ENCODE measurements at regions of chr2 and their contacts with region 1.

Region 1: GRCh38 chr2:135004005-135004746 is 43.1 kb downstream of the MAP3K19 start:
- DNase-seq: peak; percentile 32 to 76 (median 62)
- ATAC-seq: peak; percentile 92
- H3K4me3 ChIP-seq: no peak overlapping the region
- H3K4me3 Mint-ChIP-seq: peak overlapping the region in 3 of 10 donors; percentile 17 to 63 (median 21)
- H3K27ac ChIP-seq: no peak overlapping the region
- H3K27ac Mint-ChIP-seq: no peak overlapping the region
- H3K4me1 ChIP-seq: no peaks in the 10 kb centered on the region
- H3K4me1 Mint-ChIP-seq: peaks cover 0 to 8% (median 5%) of the 10 kb centered on the region in 7 donors
- H3K27me3 ChIP-seq: no peaks in the 10 kb centered on the region
- H3K27me3 Mint-ChIP-seq: peaks cover 6 to 22% (median 13%) of the 10 kb centered on the region in 5 donors

Region 2: DNA sequence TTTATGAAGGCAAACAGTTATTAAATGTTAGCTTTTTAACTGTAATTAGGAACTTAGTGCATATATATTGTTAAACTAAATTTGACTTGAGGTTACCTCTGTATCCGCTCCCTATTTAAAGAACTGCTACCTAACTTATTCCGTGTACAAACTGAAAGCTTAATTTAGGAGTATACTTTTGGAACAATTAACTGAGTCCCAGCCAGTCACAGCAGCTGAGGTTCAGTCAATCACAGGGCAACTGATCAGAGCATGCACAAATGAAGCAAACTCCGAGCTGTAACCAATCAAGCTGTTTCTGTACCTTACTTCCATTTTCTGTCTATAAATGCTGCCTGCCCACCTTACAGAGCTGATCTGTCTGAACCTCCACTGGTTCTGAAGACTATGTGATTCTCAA is 109.1 kb after region 1 on chr2:
- CTCF ChIA-PET with region 1: no interaction called
- POLR2A ChIA-PET with region 1: no interaction called
- intact Hi-C with region 1: loop called in 1 of 2 experiments (anchors 10 kb)
- DNase-seq: no peak
- ATAC-seq: no peak
- H3K4me3 ChIP-seq: no peak overlapping the region
- H3K4me3 Mint-ChIP-seq: no peak overlapping the region
- H3K27ac ChIP-seq: no peak overlapping the region
- H3K27ac Mint-ChIP-seq: no peak overlapping the region
- H3K4me1 ChIP-seq: no peaks in the 10 kb centered on the region
- H3K4me1 Mint-ChIP-seq: peaks cover 0 to 20% (median 14%) of the 10 kb centered on the region in 7 donors
- H3K27me3 ChIP-seq: no peaks in the 10 kb centered on the region
- H3K27me3 Mint-ChIP-seq: no peaks in the 10 kb centered on the region

Region 3: GRCh38 chr2:135473567-135473966 is 469.4 kb after region 1 on chr2:
- CTCF ChIA-PET with region 1: interaction called, 4 read pairs
- POLR2A ChIA-PET with region 1: no interaction called
- intact Hi-C with region 1: loop called (anchors 1 kb)
- DNase-seq: peak in 6 of 9 donors; percentile 2 to 28 (median 20)
- ATAC-seq: peak; percentile 38
- H3K4me3 ChIP-seq: no peak overlapping the region
- H3K4me3 Mint-ChIP-seq: no peak overlapping the region
- H3K27ac ChIP-seq: no peak overlapping the region
- H3K27ac Mint-ChIP-seq: no peak overlapping the region
- H3K4me1 ChIP-seq: no peaks in the 10 kb centered on the region
- H3K4me1 Mint-ChIP-seq: no peaks in the 10 kb centered on the region
- H3K27me3 ChIP-seq: no peaks in the 10 kb centered on the region
- H3K27me3 Mint-ChIP-seq: no peaks in the 10 kb centered on the region

Region 4: DNA sequence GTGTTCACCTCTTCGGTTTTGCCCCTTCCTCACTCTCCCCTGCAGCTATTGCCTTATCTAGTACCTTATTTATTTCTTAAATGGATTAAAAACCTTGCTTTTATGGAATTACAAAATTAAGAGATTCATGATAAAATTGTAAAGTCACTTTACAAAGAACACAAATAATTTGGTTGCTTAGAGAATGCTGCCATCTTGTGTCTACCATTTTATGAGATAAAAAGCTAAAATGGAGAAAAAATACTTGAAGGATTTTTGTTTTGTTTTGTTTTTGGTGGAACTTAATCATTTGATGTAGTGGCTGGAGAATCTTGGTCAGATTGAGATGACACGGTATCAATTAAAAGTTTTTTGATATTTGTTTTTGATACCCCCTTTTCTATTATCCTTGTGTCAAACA is 596.7 kb after region 1 on chr2:
- CTCF ChIA-PET with region 1: interaction called, 15 read pairs
- POLR2A ChIA-PET with region 1: no interaction called
- intact Hi-C with region 1: loop called in 1 of 2 experiments (anchors 2 kb)
- DNase-seq: peak in 4 of 9 donors; percentile 1 to 20 (median 12)
- ATAC-seq: no peak
- H3K4me3 ChIP-seq: no peak overlapping the region
- H3K4me3 Mint-ChIP-seq: no peak overlapping the region
- H3K27ac ChIP-seq: no peak overlapping the region
- H3K27ac Mint-ChIP-seq: no peak overlapping the region
- H3K4me1 ChIP-seq: no peaks in the 10 kb centered on the region
- H3K4me1 Mint-ChIP-seq: peaks cover 2 to 26% (median 8%) of the 10 kb centered on the region in 7 donors
- H3K27me3 ChIP-seq: no peaks in the 10 kb centered on the region
- H3K27me3 Mint-ChIP-seq: no peaks in the 10 kb centered on the region

Region 5: DNA sequence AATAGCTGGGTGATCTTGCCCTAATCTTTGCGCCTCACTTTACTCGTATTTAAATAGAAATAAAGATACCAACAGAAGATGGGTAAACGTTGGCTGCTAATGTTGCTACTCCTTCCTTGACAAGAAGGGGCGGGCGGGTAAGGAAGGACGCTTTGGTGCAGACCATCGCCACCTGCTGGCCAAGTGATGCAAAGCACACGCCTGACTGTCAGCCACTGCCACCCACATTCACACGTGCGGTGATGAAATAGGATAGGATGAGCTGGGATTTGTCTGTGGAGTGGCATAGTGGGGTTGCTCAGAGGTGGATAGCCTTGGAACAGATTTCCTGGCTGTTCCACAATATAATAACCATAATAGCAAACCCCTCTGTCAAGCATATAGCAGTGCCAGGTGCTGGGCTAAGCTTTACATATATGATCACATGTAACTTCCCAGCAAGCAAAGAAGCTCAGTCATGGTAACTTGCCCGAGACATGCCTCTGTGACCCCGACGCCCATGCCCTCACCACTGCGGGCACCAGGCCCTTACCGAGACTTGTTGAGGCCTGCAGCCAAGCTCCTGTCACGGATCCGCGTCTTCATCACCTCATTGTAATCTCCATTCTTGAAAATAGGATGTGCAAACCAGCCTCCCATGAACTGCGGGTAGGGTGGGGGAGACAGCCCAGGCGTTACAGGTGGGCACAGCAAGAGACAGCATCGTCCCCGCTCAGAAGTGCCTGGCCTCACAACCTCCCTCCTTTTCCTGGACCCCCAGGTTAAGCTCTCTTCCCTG is 793.5 kb after region 1 on chr2:
- CTCF ChIA-PET with region 1: interaction called, 3 read pairs
- POLR2A ChIA-PET with region 1: no interaction called
- intact Hi-C with region 1: loop called (anchors 1 kb)
- DNase-seq: peak; percentile 46 to 78 (median 69)
- ATAC-seq: peak; percentile 92
- H3K4me3 ChIP-seq: no peak overlapping the region
- H3K4me3 Mint-ChIP-seq: peak overlapping the region in 1 of 10 donors; percentile 58
- H3K27ac ChIP-seq: no peak overlapping the region
- H3K27ac Mint-ChIP-seq: peak overlapping the region in 1 of 9 donors; percentile 65
- H3K4me1 ChIP-seq: peaks cover 0 to 6% of the 10 kb centered on the region in 2 donors
- H3K4me1 Mint-ChIP-seq: peaks cover 0 to 20% (median 14%) of the 10 kb centered on the region in 7 donors
- H3K27me3 ChIP-seq: no peaks in the 10 kb centered on the region
- H3K27me3 Mint-ChIP-seq: no peaks in the 10 kb centered on the region

Measured in naive thymus-derived CD4-positive, alpha-beta T cell (primary cell).